Lower leg skin (tissue), 4 donors: ENCODE measurements at regions of chr21 and their contacts with region 1.

Region 1: DNA sequence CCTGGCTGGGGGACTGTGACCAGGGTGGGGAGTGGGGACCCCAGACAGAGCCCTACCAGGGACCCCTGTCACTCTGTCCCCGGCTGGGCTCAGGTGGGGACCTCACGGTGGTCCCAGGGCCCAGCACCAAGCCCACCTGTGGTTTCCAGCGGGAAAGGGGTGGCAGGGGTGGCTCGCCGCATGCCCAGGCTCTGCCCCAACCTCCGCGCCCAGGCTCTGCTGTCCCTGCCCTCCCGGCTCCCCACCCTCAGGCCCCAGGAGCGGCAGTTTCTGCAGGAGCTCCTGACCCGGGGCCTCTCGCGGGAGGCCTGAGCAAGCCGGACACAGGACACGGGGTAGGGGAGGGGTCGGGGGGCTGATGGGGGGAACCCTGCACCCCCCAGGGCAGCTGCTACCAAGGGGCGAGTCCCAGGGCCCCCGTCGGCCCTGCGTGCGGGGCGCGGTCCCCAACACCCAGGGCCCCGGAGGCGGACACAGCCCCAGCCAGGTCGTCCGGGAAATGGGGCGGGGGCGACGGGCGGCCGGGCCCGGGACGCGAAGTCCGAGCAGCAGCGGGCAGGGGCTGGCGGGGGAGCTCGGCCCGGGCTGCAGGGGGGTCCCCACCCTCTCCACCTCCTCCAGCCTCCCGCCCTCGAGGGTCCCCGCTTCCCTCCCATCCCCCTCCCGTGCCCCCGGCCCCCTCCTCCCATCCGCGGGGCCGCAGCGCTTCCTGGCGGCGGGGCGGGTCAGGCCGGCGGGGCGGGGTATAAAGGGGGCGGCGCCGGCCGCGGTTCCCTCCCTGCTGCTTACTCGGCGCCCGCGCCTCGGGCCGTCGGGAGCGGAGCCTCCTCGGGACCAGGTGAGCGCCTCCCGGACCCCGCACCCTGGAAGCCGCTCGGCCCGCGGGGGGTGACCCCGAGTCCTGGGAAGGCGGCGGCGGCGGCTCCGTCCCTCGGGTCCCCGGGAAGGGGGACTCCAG is at the start of gene COL6A2:
- DNase-seq: peak; percentile 41 to 92
- H3K4me3 ChIP-seq: peak within 1 kb of the TSS; percentile 39
- CTCF ChIP-seq: no peak
- POLR2A ChIP-seq: peak in 1 of 2 donors; percentile 68
- total RNA-seq, gene COL6A2: 137 to 543 (median 164) TPM

Region 2: GRCh38 chr21:45973659-45974072 is 123.9 kb before region 1 on chr21:
- intact Hi-C with region 1: loop called (anchors 10 kb)
- DNase-seq: peak; percentile 69 to 96
- H3K4me3 ChIP-seq: peak overlapping the region; percentile 22
- CTCF ChIP-seq: no peak
- POLR2A ChIP-seq: no peak